ENCODE measurements at regions of chr19 and their contacts with region 1.

Region 1: DNA sequence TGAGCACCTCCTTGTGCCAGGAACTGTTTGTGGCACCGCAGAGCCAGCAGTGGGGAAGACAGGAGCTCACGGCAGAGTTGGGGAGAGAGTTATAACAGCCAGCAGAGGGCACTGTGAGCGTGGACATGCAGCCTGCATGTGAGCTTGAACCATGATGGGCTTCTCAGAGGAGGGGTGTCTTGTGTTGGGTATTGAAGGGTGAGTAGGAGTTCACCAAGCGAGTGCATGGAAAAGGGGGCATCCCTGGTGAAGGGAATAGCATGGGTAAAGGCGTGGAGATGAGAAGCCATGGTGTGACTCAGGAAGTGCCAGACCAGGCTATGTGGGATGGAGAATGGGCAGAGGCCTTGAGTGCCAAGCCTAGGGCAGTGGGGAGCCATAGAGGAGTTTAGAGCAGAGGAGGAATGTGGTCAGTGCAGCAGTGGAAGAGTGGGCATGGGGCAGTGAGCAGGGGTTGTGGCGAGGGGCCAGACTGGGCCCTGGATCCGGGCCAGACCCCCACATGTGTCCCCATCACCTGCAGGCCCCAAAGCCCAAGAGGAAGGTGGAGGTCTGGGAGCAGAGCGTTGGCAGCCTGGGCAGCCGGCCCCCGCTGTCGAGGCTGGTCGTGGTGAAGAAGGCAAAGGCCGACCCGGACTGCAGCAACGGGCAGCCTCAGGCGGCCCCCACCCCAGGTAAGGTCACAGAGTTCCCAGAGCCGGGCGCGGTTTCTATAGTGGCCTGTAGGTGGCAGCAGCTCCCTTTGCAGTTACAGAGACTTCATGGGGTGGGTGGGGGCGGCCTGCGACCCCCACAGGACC is 11.8 kb upstream of the SHD start:
- DNase-seq: peak; percentile 17 to 67 (median 49)
- H3K4me3 ChIP-seq: no peak overlapping the region
- H3K4me3 Mint-ChIP-seq: no peak overlapping the region
- H3K27ac ChIP-seq: no peak overlapping the region
- H3K27ac Mint-ChIP-seq: peak overlapping the region; percentile 17 to 90 (median 71)
- H3K4me1 ChIP-seq: peaks cover 22% of the 10 kb centered on the region
- H3K4me1 Mint-ChIP-seq: peaks cover 20 to 34% (median 28%) of the 10 kb centered on the region in 3 donors
- H3K27me3 ChIP-seq: no peaks in the 10 kb centered on the region
- H3K27me3 Mint-ChIP-seq: no peaks in the 10 kb centered on the region

Region 2: DNA sequence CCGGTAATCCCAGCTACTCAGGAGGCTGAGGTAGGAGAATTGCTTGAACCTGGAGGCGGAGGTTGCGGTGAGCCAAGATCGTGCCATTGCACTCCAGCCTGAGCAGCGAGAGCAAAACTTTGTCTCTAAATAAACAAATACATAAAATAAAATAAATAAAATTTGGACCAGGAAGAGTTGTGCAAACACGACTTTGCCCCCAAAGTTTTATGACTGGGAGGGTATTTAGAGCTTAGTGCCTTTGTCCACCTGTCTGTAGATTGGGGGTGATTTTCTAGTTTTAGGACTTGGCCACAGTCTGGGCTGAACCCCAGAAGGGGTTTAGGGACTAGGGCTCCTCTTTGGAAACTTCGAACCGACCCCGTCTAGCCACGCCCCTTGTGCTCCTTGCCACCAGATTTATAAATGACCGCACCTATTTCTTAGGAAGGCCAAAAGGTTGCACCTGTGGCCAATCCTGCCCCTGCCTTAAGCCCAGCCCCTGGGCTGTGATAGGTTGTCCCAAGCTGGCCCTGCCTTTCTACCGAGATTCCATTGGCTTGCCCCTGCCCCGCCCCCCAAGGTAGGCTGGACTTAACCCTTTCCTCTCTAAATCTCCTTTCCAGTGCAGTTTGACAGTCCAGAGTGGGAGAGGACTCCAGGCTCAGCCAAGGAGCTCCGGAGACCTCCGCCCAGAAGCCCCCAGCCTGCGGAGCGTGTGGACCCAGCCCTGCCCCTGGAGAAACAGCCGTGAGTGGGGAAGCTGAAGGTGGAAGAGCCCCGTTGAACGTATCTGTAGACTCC is 17.1 kb after region 1 on chr19:
- CTCF ChIA-PET with region 1: no interaction called
- POLR2A ChIA-PET with region 1: no interaction called
- DNase-seq: no peak
- H3K4me3 ChIP-seq: no peak overlapping the region
- H3K4me3 Mint-ChIP-seq: no peak overlapping the region
- H3K27ac ChIP-seq: no peak overlapping the region
- H3K27ac Mint-ChIP-seq: peak overlapping the region in 1 of 8 donors; percentile 21
- H3K4me1 ChIP-seq: no peaks in the 10 kb centered on the region
- H3K4me1 Mint-ChIP-seq: peaks cover 0 to 3% (median 2%) of the 10 kb centered on the region in 3 donors
- H3K27me3 ChIP-seq: peaks cover 7% of the 10 kb centered on the region
- H3K27me3 Mint-ChIP-seq: peaks cover 14 to 18% of the 10 kb centered on the region in 2 donors

Region 3: DNA sequence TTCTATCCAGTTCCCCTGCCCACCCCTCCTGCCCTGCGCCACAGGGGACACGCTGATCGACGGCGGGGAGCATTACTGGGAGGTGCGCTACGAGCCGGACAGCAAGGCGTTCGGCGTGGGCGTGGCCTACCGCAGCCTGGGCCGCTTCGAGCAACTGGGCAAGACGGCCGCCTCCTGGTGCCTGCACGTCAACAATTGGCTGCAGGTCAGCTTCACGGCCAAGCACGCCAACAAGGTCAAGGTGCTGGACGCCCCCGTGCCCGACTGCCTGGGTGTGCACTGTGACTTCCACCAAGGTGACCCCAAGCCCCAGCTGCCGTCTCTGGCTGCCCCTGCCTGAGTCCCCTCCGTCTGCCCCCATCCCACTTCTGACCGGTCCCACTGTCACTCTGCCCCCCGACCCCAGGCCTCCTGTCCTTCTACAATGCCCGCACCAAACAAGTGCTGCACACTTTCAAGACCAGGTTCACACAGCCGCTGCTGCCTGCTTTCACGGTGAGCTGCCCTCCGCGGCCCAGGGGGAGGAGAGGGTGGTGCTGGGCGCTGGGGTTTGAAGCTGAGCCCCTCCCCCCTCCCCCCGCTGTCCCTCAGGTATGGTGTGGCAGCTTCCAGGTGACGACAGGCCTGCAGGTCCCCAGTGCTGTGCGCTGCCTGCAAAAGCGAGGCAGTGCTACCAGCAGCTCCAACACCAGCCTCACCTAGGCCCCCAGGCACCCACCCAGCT is 55.8 kb after region 1 on chr19:
- CTCF ChIA-PET with region 1: interaction called, 14 read pairs
- POLR2A ChIA-PET with region 1: no interaction called
- DNase-seq: no peak
- H3K4me3 ChIP-seq: no peak overlapping the region
- H3K4me3 Mint-ChIP-seq: no peak overlapping the region
- H3K27ac ChIP-seq: no peak overlapping the region
- H3K27ac Mint-ChIP-seq: no peak overlapping the region
- H3K4me1 ChIP-seq: peaks cover 11% of the 10 kb centered on the region
- H3K4me1 Mint-ChIP-seq: peaks cover 16 to 21% (median 17%) of the 10 kb centered on the region in 3 donors
- H3K27me3 ChIP-seq: no peaks in the 10 kb centered on the region
- H3K27me3 Mint-ChIP-seq: peaks cover 0 to 4% of the 10 kb centered on the region in 2 donors

Region 4: DNA sequence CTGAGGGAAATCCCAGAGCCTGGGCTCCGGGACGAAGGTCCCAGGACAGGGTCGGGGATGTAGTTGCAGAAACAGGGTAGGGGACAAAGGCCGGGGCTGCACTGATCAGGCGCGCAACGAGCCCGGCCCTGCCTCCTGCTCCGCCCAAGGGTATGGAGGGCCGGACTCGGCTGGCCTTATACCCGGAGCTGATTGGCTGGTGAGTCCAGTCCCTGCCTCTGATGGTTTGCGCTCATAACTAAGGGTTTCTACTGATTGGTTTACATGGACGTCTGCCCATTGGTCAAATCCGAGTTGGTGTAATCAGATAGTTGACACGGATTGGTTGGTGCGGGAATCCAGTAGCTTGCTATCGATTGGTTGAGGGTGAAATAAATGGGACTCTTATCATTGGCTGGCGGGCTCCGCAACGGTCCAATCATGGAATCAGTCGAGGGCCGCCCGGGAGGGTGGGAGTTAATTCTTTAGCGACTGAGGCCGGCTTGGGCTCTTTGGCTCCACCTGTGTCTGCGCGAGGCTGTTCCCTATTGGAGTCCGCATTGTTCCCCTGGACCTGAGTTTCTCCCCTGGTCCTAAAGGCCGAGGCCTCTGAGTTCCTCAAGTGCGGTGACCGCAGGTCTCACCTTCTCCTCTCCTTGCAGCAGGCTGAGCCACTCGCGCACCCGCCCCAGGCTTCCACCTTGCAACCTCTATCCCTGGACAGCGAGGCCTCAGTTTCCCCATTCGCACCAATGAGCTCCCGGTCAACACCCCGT is 75.5 kb after region 1 on chr19:
- CTCF ChIA-PET with region 1: interaction called, 13 read pairs
- POLR2A ChIA-PET with region 1: interaction called, 3 read pairs
- DNase-seq: peak; percentile 83 to 95 (median 92)
- H3K4me3 ChIP-seq: peak overlapping the region; percentile 92
- H3K4me3 Mint-ChIP-seq: peak overlapping the region; percentile 80 to 96 (median 91)
- H3K27ac ChIP-seq: peak overlapping the region; percentile 80
- H3K27ac Mint-ChIP-seq: peak overlapping the region; percentile 82 to 99 (median 92)
- H3K4me1 ChIP-seq: peaks cover 22% of the 10 kb centered on the region
- H3K4me1 Mint-ChIP-seq: peaks cover 29 to 46% (median 38%) of the 10 kb centered on the region in 3 donors
- H3K27me3 ChIP-seq: no peaks in the 10 kb centered on the region
- H3K27me3 Mint-ChIP-seq: peaks cover 0 to 3% of the 10 kb centered on the region in 2 donors

Region 5: DNA sequence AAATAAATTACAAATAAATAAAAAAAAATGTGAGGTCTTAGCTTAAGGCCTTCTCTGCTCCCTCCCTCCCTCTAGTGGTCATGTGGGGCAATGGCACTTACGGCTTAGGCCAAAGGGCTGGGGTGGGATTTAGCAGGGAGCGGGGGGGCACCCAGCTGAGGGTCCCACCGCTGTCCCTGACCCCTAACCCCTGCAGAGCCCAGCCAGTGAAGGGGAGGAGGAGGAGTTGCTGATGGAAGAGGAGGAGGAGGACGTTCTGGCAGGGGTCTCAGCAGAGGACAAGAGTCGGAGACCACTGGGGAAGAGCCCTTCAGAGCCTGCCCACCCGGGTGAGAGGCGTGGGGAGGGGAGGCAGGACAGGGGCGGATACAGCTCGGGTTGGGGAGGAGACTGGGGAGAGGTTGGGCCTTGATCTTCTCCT is 85.4 kb after region 1 on chr19:
- CTCF ChIA-PET with region 1: interaction called, 41 read pairs
- POLR2A ChIA-PET with region 1: no interaction called
- DNase-seq: peak in 4 of 5 donors; percentile 50 to 77 (median 52)
- H3K4me3 ChIP-seq: no peak overlapping the region
- H3K4me3 Mint-ChIP-seq: no peak overlapping the region
- H3K27ac ChIP-seq: no peak overlapping the region
- H3K27ac Mint-ChIP-seq: peak overlapping the region in 3 of 8 donors; percentile 22 to 87 (median 46)
- H3K4me1 ChIP-seq: no peaks in the 10 kb centered on the region
- H3K4me1 Mint-ChIP-seq: peaks cover 0 to 3% (median 2%) of the 10 kb centered on the region in 3 donors
- H3K27me3 ChIP-seq: no peaks in the 10 kb centered on the region
- H3K27me3 Mint-ChIP-seq: no peaks in the 10 kb centered on the region

Region 6: DNA sequence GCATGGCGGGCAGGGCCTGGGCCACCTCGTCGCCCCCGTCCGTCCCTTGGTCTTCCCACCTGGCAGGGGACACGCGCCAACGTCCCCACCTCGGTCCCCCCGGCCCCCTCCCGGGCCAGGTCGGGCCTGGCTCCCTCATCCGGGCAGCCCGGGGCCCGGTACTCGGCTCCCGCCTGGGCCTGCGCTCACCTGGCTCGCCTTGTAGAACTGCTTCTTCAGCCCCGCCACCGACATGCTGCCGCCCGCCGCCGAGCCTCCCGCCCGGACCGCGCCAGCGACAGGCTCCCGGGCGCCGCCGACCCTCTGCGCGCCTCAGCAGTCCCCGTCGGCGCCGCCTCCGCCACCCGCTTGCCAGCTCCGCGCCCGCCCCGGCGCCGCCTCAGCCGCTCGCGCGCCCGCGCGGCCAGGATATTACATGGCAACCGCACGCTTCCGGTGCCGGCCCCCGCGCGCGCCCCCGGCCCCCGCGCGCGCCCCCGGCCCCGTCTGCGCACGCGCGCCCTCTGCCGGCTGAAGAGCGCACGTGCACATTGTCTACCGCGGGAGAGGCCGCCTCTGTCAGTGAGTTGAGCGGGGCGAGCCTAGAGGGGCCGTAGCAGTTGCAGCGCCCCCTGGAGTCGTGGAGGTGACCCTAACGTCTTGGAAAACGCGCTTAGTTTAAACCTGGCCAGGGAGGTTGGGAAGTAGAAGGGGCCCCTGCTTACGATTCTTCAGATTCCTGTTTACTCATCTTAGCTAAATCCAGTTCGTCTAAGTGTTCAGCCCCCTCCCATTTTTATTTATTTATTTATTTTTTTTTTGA is 133.0 kb after region 1 on chr19 and contains the start of gene SH3GL1:
- CTCF ChIA-PET with region 1: interaction called, 10 read pairs
- POLR2A ChIA-PET with region 1: no interaction called
- DNase-seq: peak; percentile 89 to 94 (median 90)
- H3K4me3 ChIP-seq: peak within 1 kb of the TSS; percentile 92
- H3K4me3 Mint-ChIP-seq: peak within 1 kb of the TSS; percentile 85 to 94 (median 88)
- H3K27ac ChIP-seq: peak within 1 kb of the TSS; percentile 91
- H3K27ac Mint-ChIP-seq: peak within 1 kb of the TSS; percentile 95 to 100 (median 98)
- H3K4me1 ChIP-seq: peaks cover 54% of the 10 kb centered on the region
- H3K4me1 Mint-ChIP-seq: peaks cover 51 to 78% (median 70%) of the 10 kb centered on the region in 3 donors
- H3K27me3 ChIP-seq: no peaks in the 10 kb centered on the region
- H3K27me3 Mint-ChIP-seq: no peaks in the 10 kb centered on the region
- total RNA-seq, gene SH3GL1: 39.8 to 41.2 TPM

Region 7: GRCh38 chr19:4415352-4415751 is 148.1 kb after region 1 on chr19:
- CTCF ChIA-PET with region 1: no interaction called
- POLR2A ChIA-PET with region 1: no interaction called
- DNase-seq: no peak
- H3K4me3 ChIP-seq: no peak overlapping the region
- H3K4me3 Mint-ChIP-seq: no peak overlapping the region
- H3K27ac ChIP-seq: no peak overlapping the region
- H3K27ac Mint-ChIP-seq: peak overlapping the region in 1 of 8 donors; percentile 32
- H3K4me1 ChIP-seq: no peaks in the 10 kb centered on the region
- H3K4me1 Mint-ChIP-seq: no peaks in the 10 kb centered on the region
- H3K27me3 ChIP-seq: no peaks in the 10 kb centered on the region
- H3K27me3 Mint-ChIP-seq: no peaks in the 10 kb centered on the region

Region 8: DNA sequence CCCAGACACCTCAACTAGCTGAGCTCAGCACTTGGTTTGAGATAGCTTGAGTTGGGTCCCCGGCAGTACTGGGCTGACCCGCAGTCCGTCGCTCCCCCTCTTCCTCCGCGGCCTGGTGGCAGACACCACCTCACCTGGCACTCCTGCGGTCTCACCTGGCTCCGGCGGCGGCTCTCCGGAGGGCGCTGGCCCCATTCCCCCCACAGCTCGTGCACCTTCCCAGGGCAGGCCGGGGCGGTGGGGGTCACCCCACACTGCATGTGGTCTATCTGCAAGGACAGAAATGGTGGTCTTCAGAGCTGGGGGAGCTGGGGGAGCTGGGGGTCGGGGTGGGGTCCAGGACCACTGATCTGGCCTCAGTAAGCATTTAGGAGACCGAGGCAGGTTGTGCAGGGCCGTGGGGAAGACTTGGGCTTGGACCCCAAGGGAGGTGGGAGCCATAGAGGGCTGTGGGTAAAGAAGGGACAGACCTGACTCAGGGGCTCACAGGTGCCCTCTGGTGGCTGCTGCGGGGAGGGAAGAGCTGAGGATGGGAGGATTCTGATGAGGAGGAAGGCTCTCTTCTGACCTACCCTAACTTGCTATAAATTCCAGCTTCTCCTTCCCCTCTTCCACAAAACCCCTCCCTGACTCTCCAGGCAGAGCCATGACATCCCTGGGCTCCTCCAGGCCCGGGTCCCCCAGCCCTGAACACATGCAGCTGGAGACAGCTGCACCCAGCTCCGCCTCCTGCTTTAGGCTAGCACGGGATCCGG is 257.7 kb after region 1 on chr19:
- CTCF ChIA-PET with region 1: interaction called, 11 read pairs
- POLR2A ChIA-PET with region 1: no interaction called
- DNase-seq: peak; percentile 32 to 72 (median 46)
- H3K4me3 ChIP-seq: no peak overlapping the region
- H3K4me3 Mint-ChIP-seq: peak overlapping the region in 1 of 7 donors; percentile 44
- H3K27ac ChIP-seq: no peak overlapping the region
- H3K27ac Mint-ChIP-seq: no peak overlapping the region
- H3K4me1 ChIP-seq: no peaks in the 10 kb centered on the region
- H3K4me1 Mint-ChIP-seq: no peaks in the 10 kb centered on the region
- H3K27me3 ChIP-seq: no peaks in the 10 kb centered on the region
- H3K27me3 Mint-ChIP-seq: peaks cover under 1 to 9% of the 10 kb centered on the region in 2 donors